ENCODE measurements at regions of chr16 and their contacts with region 1.

Region 1: GRCh38 chr16:9134739-9135138 is 43.3 kb downstream of the HAPSTR1 start:
- DNase-seq: peak; percentile 91
- H3K4me3 ChIP-seq: peak overlapping the region; percentile 18
- H3K27ac ChIP-seq: peak overlapping the region; percentile 62
- H3K4me1 ChIP-seq: peaks cover 45% of the 10 kb centered on the region
- CTCF ChIP-seq: peak; percentile 96

Region 2: GRCh38 chr16:8567750-8568617 is 566.8 kb before region 1 on chr16:
- CTCF ChIA-PET with region 1: no interaction called
- POLR2A ChIA-PET with region 1: no interaction called
- intact Hi-C with region 1: loop called (anchors 1 kb)
- DNase-seq: peak; percentile 91
- H3K4me3 ChIP-seq: no peak overlapping the region
- H3K27ac ChIP-seq: no peak overlapping the region
- H3K4me1 ChIP-seq: no peaks in the 10 kb centered on the region
- CTCF ChIP-seq: peak; percentile 99

Region 3: DNA sequence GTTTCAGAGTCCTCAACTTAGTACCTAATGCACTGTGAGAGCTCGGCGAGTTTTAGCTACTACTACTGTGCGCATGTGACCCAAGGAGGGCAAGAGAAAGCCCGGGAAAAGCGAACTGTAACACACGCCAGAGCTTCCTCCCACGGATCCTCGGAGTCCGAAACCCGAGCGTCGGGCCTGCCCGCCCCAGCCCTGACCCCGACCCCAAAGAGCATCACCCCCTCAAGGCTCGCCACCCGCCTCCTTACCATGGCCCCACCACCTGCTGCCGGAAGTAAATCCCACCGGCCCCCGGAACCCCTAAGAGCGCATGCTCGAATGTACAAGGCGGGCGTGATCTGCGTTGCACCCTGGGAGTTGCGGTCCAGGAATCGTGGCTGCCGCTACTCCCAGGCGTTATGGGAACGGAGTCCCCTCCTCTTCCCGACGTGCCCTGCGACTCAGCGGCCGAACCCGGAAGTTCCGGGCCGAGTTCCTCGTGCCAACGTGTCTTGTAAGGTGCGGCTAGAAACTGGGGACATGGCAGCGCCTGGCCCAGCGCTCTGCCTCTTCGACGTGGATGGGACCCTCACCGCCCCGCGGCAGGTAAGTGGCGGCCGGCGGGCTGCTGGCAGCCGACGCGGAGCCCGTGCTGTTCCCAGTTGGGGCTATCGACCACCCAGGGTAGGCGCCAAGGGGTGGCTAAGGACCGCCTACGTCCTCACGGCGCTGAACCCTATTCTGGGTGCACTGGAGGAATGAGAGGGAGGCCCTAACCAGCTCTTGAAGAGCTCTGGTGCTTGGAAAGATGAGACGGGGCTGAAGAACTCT is 337.2 kb before region 1 on chr16 and contains the starts of genes PMM2 and TMEM186:
- CTCF ChIA-PET with region 1: no interaction called
- POLR2A ChIA-PET with region 1: no interaction called
- intact Hi-C with region 1: loop called (anchors 2 kb)
- DNase-seq: peak; percentile 98
- H3K4me3 ChIP-seq: peak within 1 kb of the TSS; percentile 90
- H3K27ac ChIP-seq: peak within 1 kb of the TSS; percentile 39
- H3K4me1 ChIP-seq: peaks cover 32% of the 10 kb centered on the region
- CTCF ChIP-seq: no peak
- total RNA-seq, gene PMM2: 39.1 and 41.1 TPM in 2 replicates
- total RNA-seq, gene TMEM186: 8.5 and 11.7 TPM in 2 replicates

Region 4: DNA sequence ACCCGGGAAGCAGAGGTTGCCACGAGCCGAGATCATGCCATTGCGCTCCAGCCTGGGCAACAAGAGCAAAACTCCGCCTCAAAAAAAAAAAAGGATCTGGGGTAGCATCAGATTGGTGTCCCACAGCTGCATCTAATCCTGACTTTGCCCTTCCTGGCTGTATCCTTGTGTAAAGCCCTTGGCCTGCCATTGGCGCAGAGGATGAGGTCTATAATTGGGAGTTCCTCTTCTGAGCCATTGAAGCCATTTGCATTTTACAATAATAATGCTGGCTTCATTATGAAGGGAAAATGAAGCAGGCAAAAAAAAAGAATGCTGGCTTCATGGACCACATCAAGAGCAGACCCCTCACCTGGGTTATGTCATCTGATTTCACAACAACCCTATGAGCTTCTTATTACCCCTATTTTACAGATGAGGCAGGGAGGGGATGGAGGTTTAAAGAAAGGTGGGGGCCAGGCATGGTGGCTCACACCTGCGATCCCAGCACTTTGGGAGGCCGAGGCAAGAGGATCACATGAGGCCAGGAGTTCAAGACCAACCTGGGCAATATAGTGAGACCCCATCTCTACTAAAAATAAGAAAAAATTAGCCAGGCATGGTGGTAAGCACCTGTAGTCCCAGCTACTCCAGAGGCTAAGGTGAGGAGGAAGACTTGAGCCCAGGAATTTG is 253.8 kb before region 1 on chr16:
- CTCF ChIA-PET with region 1: no interaction called
- POLR2A ChIA-PET with region 1: no interaction called
- intact Hi-C with region 1: loop called (anchors 5 kb)
- DNase-seq: no peak
- H3K4me3 ChIP-seq: no peak overlapping the region
- H3K27ac ChIP-seq: no peak overlapping the region
- H3K4me1 ChIP-seq: peaks cover 14% of the 10 kb centered on the region
- CTCF ChIP-seq: no peak

Region 5: DNA sequence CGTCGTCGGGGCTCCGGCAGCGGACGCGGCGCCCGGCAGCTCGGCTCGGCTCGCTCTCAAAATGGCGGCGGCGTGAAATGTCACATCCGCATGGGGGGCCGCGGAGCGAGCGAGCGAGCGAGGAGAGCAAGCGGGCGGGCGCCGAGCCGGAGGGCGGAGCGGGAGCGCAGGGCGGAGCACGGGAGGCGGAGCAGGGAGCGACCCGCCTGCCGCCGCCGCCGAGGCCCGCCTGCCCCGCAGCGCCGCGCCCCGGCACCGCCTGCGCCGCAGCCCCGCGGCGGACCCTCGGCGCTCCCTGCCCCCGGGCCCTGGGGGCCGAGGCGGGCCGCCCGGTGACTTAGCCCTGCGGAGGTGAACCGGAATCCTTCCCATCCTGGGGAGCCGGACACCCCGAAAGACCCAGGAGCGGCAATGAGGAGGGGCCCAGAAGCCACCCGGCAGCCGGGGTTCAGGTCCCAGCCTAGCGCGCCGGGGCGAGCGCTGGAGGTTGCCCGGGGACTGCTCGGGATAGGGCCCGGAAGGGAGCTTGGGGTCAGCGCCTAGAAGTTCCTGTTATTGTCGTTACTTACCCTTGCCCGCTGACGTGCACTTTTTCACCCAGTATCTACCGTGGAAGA is 170.8 kb before region 1 on chr16 and contains the start of gene USP7:
- CTCF ChIA-PET with region 1: no interaction called
- POLR2A ChIA-PET with region 1: no interaction called
- intact Hi-C with region 1: loop called (anchors 2 kb)
- DNase-seq: peak; percentile 94
- H3K4me3 ChIP-seq: peak within 1 kb of the TSS; percentile 84
- H3K27ac ChIP-seq: peak within 1 kb of the TSS; percentile 67
- H3K4me1 ChIP-seq: peaks cover 38% of the 10 kb centered on the region
- CTCF ChIP-seq: no peak
- total RNA-seq, gene USP7: 46.4 and 61.5 TPM in 2 replicates

Region 6: DNA sequence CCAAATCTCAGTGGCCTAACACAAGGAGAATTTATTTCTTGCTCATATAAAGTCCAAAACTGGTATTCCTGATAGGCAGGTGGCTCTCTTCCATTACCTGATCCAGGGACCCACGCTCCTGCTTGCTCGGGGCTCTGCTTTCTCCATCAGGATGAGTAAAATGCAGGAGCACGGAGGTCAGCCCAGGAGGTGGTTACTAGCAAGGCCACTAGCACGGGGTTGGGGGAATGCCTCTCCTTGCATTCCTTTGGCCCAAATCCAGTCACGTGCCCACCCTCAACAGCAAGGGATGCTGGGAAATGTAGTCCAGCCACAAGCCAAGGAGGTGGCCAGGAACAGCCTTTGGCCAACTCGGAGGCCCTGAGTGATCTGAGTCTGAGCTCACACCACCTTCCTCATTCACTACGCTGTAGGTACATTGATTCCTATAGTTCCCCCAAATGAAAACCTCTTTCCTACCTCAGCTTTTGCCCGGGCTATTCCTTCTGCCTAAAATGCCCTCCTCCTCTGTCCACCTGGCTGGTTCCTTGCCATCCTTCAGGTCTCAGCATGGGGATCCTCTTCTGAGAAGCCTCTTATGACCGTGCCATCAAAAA is 81.6 kb before region 1 on chr16:
- CTCF ChIA-PET with region 1: no interaction called
- POLR2A ChIA-PET with region 1: interaction called, 4 read pairs
- intact Hi-C with region 1: loop called (anchors 10 kb)
- DNase-seq: peak; percentile 52
- H3K4me3 ChIP-seq: no peak overlapping the region
- H3K27ac ChIP-seq: no peak overlapping the region
- H3K4me1 ChIP-seq: peaks cover 15% of the 10 kb centered on the region
- CTCF ChIP-seq: no peak

Region 7: DNA sequence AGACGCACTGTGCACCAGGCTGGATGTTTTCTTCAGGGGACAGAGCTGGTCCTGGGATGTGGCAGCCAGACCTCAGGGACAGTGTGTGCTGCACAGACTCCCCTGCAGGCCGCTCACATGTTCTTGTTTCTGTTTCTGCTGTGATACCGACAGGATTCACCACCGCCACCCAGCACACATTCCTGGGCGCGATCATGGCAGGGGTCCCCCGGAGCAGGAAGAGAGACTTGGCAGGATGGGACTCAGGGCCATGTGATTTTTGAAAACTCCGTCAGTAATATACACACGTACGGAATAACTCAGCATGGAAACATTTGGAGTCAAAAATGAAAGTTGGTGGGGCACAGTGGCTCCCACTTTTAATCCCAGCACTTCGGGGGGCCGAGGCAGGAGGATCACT is 35.7 kb after region 1 on chr16:
- CTCF ChIA-PET with region 1: no interaction called
- POLR2A ChIA-PET with region 1: no interaction called
- intact Hi-C with region 1: no loop called
- DNase-seq: no peak
- H3K4me3 ChIP-seq: no peak overlapping the region
- H3K27ac ChIP-seq: no peak overlapping the region
- H3K4me1 ChIP-seq: peaks cover 7% of the 10 kb centered on the region
- CTCF ChIP-seq: no peak

Region 8: GRCh38 chr16:9199311-9199710 is 64.6 kb after region 1 on chr16:
- CTCF ChIA-PET with region 1: no interaction called
- POLR2A ChIA-PET with region 1: no interaction called
- intact Hi-C with region 1: no loop called
- DNase-seq: no peak
- H3K4me3 ChIP-seq: no peak overlapping the region
- H3K27ac ChIP-seq: no peak overlapping the region
- H3K4me1 ChIP-seq: no peaks in the 10 kb centered on the region
- CTCF ChIP-seq: no peak

Region 9: GRCh38 chr16:9258423-9259051 is 123.8 kb after region 1 on chr16:
- CTCF ChIA-PET with region 1: no interaction called
- POLR2A ChIA-PET with region 1: no interaction called
- intact Hi-C with region 1: loop called (anchors 5 kb)
- DNase-seq: peak; percentile 70
- H3K4me3 ChIP-seq: no peak overlapping the region
- H3K27ac ChIP-seq: no peak overlapping the region
- H3K4me1 ChIP-seq: no peaks in the 10 kb centered on the region
- CTCF ChIP-seq: peak; percentile 95

Region 10: GRCh38 chr16:9647981-9648712 is 513.4 kb after region 1 on chr16:
- CTCF ChIA-PET with region 1: no interaction called
- POLR2A ChIA-PET with region 1: no interaction called
- intact Hi-C with region 1: no loop called
- DNase-seq: peak; percentile 22
- H3K4me3 ChIP-seq: no peak overlapping the region
- H3K27ac ChIP-seq: no peak overlapping the region
- H3K4me1 ChIP-seq: no peaks in the 10 kb centered on the region
- CTCF ChIP-seq: peak; percentile 77

Measured in OCI-LY7 (cell line).